GM12878 (cell line): ENCODE measurements at regions of chr6 and their contacts with region 1.

Region 1: DNA sequence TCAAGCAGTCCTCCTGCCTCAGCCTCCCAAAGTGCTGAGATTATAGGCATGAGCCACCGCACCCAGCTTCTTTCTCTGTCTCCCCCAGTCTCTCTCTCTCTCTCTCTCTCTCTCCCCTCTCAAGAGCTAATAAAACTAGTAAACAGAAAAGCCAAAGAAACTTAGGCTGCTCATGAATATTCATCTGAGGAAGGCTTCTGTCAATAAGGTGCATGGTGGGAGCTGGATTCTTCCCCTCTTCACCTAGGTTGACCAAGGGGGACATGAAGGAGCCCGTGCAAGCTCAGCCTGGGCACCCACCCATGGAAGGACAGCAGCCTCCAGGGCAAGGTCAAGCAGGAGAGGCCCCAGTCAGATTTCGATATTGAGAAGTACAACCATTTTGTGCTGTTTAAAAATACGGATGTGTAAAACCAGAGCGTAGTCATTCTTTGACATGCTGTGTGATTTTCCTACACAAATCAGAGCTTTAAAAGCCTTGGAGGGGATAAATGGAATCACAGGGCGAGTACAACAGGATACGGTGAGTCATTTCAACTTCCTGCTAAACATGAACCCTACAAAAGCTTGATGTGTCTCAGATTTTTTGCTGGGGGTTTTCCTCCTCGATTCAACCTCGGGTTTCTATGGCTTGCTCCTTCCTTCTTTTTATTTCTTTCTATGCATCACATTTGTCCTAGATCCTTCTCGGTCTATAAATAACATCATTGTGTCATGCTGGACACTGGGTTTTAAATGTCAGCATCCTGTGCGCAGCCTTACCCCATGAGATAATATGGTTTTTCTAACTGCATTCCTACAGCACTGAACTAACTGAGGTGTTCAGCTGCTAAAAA is 368.9 kb upstream of the JARID2 start:
- DNase-seq: peak; percentile 95
- ATAC-seq: peak; percentile 71
- H3K4me3 ChIP-seq: no peak overlapping the region; the same call in 1 of the 2 replicates
- H3K27ac ChIP-seq: peak overlapping the region; percentile 89
- H3K4me1 ChIP-seq: peaks cover 54% of the 10 kb centered on the region
- H3K27me3 ChIP-seq: no peaks in the 10 kb centered on the region
- CTCF ChIP-seq: no peak
- EP300 ChIP-seq: peak; percentile 61 to 89; a peak in 2 of 4 replicates
- POLR2A ChIP-seq: no peak
- RAD21 ChIP-seq: 0 out of 2 replicates have a peak, but pooled peaks have one; percentile 15

Region 2: DNA sequence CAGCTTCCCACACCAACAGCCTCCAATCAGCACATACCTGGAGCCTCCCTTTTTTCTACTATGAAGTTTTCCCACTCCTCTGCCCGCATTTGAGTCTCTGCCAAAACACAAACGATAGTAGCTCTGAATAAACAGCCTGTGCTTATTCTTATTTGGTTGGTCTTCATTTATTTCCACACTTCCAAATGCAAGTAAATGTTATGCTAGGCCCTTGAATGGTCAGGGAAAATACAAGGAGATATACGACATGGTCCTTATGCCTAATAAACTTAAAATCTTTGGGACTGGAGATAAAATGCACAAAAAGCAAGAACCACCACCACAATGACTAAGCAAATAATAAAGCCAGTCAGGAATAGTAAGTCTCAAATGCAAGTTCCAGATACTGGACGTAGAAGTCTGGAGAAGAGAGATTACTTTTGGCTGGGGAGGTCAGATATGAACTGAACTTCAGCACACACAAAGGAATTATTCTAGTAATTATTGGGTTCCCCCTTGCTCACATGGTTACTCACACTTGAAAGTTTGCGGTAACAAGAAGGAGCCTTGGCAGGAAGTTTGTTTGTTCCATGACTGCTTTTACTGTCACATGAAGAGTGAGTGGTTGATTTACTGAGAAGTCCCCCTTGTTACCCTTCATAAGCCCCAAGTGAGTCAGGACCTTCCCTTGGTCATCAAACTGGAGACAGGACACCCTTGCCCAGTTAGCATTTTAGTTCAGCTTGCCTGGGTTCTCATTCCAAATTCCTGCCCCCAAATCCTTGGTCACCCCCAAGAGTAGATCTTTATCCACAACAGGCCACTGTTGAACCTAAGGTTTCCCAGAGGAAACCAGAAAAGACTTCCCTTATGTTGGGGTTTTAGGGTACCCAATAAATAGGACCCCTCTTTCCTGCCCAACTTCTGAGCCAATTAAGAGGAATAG is 142.3 kb before region 1 on chr6:
- CTCF ChIA-PET with region 1: no interaction called
- POLR2A ChIA-PET with region 1: interaction called, 4 read pairs
- RAD21 ChIA-PET with region 1: interaction called, 6 read pairs
- SMC1A ChIA-PET with region 1: interaction called, 5 read pairs
- in situ Hi-C with region 1: loop called (anchors 5 kb)
- intact Hi-C with region 1: loop called (anchors 2 kb)
- DNase-seq: peak; percentile 88
- ATAC-seq: peak; percentile 92
- H3K4me3 ChIP-seq: no peak overlapping the region
- H3K27ac ChIP-seq: peak overlapping the region; percentile 76
- H3K4me1 ChIP-seq: peaks cover 41% of the 10 kb centered on the region
- H3K27me3 ChIP-seq: no peaks in the 10 kb centered on the region
- CTCF ChIP-seq: no peak
- EP300 ChIP-seq: peak; percentile 94
- POLR2A ChIP-seq: no peak
- RAD21 ChIP-seq: peak; percentile 4; the same call in 1 of the 2 replicates

Region 3: DNA sequence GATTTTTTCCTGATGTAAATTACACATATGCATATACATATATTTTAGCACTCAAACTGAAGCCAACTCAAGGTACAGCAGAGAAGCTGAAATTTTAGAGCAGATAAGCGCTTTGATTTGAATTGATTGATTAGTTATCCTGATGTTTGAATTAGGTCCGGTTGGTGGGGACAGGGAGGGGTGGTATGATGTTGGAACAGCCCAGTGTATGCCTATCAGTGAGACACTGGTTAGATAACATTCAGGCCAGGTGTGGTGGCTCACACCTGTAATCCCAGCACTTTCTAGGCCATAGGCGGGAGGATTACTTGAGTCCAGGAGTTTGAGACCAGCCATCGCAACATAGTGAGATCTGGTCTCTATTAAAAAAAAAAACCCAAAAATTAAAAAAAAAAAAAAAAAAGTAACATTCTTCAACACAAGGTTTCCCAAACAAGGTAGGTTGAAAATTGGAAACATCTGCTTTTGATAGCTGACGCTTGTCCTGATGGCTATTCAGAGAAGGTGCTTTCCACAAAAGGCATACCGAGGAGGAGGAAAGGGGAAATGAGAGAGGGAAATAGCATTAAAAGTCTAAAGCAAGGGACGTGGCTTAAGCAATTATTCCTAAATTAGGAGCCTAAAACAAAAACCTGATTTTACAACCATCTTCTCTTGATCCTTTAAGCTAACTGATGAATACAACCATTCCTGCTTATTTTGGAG is 80.5 kb after region 1 on chr6:
- CTCF ChIA-PET with region 1: no interaction called
- POLR2A ChIA-PET with region 1: no interaction called
- RAD21 ChIA-PET with region 1: interaction called, 3 read pairs
- SMC1A ChIA-PET with region 1: interaction called, 3 read pairs
- in situ Hi-C with region 1: no loop called
- intact Hi-C with region 1: loop called (anchors 5 kb)
- DNase-seq: peak; percentile 35
- ATAC-seq: peak; percentile 70
- H3K4me3 ChIP-seq: no peak overlapping the region
- H3K27ac ChIP-seq: peak overlapping the region; percentile 4; the same call in 1 of the 2 replicates
- H3K4me1 ChIP-seq: peaks cover 16% of the 10 kb centered on the region
- H3K27me3 ChIP-seq: no peaks in the 10 kb centered on the region
- CTCF ChIP-seq: no peak
- EP300 ChIP-seq: peak; percentile 71 to 73; a peak in 3 of 4 replicates
- POLR2A ChIP-seq: no peak
- RAD21 ChIP-seq: no peak

Region 4: DNA sequence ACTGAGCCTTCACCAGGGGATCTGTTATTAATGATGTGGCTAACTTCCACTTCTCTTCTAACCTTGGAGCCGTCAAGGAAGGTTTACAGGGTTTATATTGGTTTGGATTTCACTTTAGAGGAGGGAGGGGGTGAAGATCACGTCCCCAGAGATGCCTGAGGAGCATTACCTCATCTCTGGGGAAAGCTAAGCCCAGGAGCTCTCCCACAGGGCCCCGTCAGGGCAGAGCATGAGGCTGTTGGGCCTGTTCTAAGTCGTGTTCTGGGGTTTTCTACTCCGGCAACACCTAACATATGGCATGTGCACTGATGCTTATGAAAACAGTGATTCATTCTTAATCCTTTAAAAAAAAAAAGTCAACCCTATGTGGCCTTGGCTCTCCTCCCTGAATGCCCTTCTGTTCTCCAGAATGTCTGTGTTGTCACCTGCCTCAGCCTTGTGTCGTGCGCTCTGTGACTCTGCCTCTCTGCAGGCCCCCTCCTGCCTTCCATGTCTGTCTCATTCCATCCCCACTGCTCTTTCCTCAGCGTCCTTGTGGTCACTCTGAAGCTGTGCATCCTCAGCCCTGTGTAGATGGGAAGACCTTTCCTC is 271.5 kb after region 1 on chr6:
- CTCF ChIA-PET with region 1: no interaction called
- POLR2A ChIA-PET with region 1: no interaction called
- RAD21 ChIA-PET with region 1: no interaction called
- SMC1A ChIA-PET with region 1: no interaction called
- in situ Hi-C with region 1: no loop called
- intact Hi-C with region 1: loop called (anchors 5 kb)
- DNase-seq: no peak
- ATAC-seq: peak; percentile 75
- H3K4me3 ChIP-seq: no peak overlapping the region
- H3K27ac ChIP-seq: no peak overlapping the region
- H3K4me1 ChIP-seq: peaks cover 14% of the 10 kb centered on the region
- H3K27me3 ChIP-seq: no peaks in the 10 kb centered on the region
- CTCF ChIP-seq: no peak
- EP300 ChIP-seq: no peak; a peak in 1 of 4 replicates
- POLR2A ChIP-seq: no peak
- RAD21 ChIP-seq: no peak

Region 5: GRCh38 chr6:15305496-15305895 is 428.5 kb after region 1 on chr6:
- CTCF ChIA-PET with region 1: no interaction called
- POLR2A ChIA-PET with region 1: no interaction called
- RAD21 ChIA-PET with region 1: no interaction called
- SMC1A ChIA-PET with region 1: no interaction called
- in situ Hi-C with region 1: no loop called
- intact Hi-C with region 1: loop called (anchors 5 kb)
- DNase-seq: no peak
- ATAC-seq: peak; percentile 67
- H3K4me3 ChIP-seq: peak overlapping the region; percentile 37; the same call in 1 of the 2 replicates
- H3K27ac ChIP-seq: peak overlapping the region; percentile 87
- H3K4me1 ChIP-seq: peaks cover 68% of the 10 kb centered on the region
- H3K27me3 ChIP-seq: no peaks in the 10 kb centered on the region
- CTCF ChIP-seq: no peak
- EP300 ChIP-seq: peak in 1 of 2 experiments; percentile 55; a peak in 2 of 4 replicates
- POLR2A ChIP-seq: no peak
- RAD21 ChIP-seq: no peak